ENCODE measurements at regions of chr20 and their contacts with region 1.

Region 1: DNA sequence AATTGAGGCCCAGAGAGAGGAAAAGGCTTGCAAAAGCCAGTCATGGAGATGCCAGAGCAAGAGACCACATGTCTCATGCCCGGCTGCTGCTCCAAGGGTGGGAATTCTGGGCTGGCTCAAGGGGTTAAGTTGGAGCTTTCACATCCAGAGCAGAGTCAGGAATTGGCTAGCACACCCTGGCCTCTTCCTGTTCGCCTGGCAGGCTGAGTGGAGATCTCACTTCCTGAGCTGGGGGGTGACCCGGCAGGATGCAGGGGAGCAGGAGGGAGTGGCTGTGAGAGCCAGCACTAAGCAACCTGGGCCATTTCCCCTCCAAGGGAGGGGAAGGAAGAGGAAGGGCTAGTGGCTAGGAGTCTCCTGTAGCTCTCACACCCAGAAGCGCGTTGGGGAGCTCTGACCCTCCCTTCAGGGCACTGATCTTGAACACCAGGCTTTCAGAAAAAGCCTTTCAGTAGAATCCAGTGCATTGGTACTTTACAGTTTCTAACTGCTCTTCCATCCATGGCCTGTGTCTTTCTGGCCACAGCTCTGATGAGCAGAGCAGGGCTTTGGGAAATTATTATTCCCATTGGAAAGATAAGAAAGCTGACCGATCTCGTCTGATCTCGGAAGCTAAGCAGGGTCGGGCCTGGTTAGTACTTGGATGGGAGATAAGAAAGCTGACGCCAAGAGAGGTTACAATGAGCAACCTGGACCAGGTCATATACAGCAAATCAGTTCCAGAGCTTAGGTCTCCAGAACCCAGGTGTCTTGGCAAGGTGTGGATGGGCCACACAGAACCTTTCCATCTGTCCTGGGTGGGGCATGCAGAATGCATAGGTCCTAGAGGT is 2.2 kb upstream of the CCM2L start:
- DNase-seq: peak in 1 of 2 experiments; percentile 62
- H3K4me3 ChIP-seq: no peak overlapping the region
- H3K27ac ChIP-seq: no peak overlapping the region; the same call in 1 of the 2 replicates
- H3K4me1 ChIP-seq: peaks cover 19 to 25% (median 22%) of the 10 kb centered on the region in 4 experiments
- H3K27me3 ChIP-seq: no peaks in the 10 kb centered on the region
- CTCF ChIP-seq: no peak
- EP300 ChIP-seq: no peak
- POLR2A ChIP-seq: no peak
- RAD21 ChIP-seq: no peak

Region 2: DNA sequence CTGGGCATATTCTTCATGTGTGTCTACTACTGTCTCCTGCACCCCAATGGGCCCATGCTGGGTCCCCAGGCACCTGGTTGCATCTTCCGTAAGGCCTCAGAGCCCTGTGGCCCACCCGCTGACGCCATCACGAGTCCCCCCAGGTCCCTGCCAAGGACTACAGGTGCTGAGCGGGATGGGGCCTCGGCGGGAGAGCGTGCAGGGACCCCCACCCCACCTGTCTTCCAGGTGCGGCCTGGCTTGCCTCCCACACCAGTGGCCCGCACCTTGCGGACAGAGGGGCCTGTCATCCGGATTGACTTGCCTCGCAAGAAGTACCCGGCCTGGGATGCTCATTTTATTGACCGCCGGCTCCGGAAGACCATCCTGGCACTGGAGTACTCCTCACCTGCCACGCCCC is 11.0 kb before region 1 on chr20:
- CTCF ChIA-PET with region 1: interaction called, 16 read pairs
- POLR2A ChIA-PET with region 1: no interaction called
- DNase-seq: no peak
- H3K4me3 ChIP-seq: no peak overlapping the region
- H3K27ac ChIP-seq: no peak overlapping the region
- H3K4me1 ChIP-seq: peaks cover 0 to 10% (median 7%) of the 10 kb centered on the region in 4 experiments; a peak in 4 of 7 replicates
- H3K27me3 ChIP-seq: peaks cover 2 to 36% (median 28%) of the 10 kb centered on the region in 4 experiments
- CTCF ChIP-seq: no peak
- EP300 ChIP-seq: no peak
- POLR2A ChIP-seq: no peak
- RAD21 ChIP-seq: no peak

Region 3: GRCh38 chr20:32018269-32019074 is 10.5 kb after region 1 on chr20:
- CTCF ChIA-PET with region 1: interaction called, 20 read pairs
- POLR2A ChIA-PET with region 1: interaction called, 8 read pairs
- DNase-seq: peak; percentile 57 to 99
- H3K4me3 ChIP-seq: peak overlapping the region; percentile 67 to 89 (median 76)
- H3K27ac ChIP-seq: peak overlapping the region; percentile 73; the same call in 1 of the 2 replicates
- H3K4me1 ChIP-seq: peaks cover 0 to 10% (median 7%) of the 10 kb centered on the region in 4 experiments; a peak in 5 of 7 replicates
- H3K27me3 ChIP-seq: peaks cover 0 to 8% (median under 1%) of the 10 kb centered on the region in 4 experiments; a peak in 4 of 7 replicates
- CTCF ChIP-seq: peak; percentile 2 to 39 (median 23)
- EP300 ChIP-seq: no peak
- POLR2A ChIP-seq: peak; percentile 83 to 84; a peak in 2 of 3 replicates
- RAD21 ChIP-seq: no peak